Breast epithelium (tissue), 4 donors: ENCODE measurements at regions of chr4 and their contacts with region 1.

Region 1: GRCh38 chr4:83109421-83110222 is 4.9 kb downstream of the PLAC8 start:
- DNase-seq: no peak
- H3K4me3 ChIP-seq: peak overlapping the region; percentile 53 to 72 (median 65)
- H3K27ac ChIP-seq: peak overlapping the region; percentile 53 to 62
- H3K4me1 ChIP-seq: no peaks in the 10 kb centered on the region
- H3K27me3 ChIP-seq: no peaks in the 10 kb centered on the region
- CTCF ChIP-seq: no peak
- POLR2A ChIP-seq: no peak

Region 2: DNA sequence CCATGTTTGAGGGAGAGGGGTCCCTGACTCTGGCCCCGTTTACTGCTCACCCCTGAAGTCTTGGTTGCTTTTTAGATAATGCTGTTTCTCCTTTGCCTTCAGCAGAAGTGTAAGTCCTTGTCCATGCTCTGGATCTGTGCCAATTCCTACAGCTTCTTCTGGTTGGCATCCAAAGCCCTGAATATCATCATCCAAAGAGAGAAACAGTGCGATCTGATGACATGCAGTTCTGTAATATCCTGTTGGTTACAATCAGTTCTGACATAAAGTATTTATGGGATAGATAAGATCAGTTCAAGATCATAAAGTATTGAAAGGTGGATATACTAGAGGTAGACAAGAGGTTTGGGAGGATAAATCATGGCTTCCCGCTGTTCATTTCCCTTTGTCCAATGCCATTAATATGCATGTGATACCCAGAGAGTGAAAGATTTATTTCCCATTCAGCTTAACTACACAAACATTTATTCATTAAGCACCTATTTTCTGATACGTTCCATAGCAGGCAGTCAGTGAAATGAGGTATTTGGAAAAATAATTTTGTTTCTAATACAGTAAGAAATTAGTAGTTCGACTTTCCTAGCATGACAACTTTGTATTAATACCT is 494.7 kb before region 1 on chr4:
- intact Hi-C with region 1: loop called (anchors 5 kb)
- DNase-seq: no peak
- H3K4me3 ChIP-seq: no peak overlapping the region
- H3K27ac ChIP-seq: no peak overlapping the region
- H3K4me1 ChIP-seq: no peaks in the 10 kb centered on the region
- H3K27me3 ChIP-seq: no peaks in the 10 kb centered on the region
- CTCF ChIP-seq: no peak
- POLR2A ChIP-seq: no peak